ENCODE measurements at regions of chr1 and their contacts with region 1.

Region 1: DNA sequence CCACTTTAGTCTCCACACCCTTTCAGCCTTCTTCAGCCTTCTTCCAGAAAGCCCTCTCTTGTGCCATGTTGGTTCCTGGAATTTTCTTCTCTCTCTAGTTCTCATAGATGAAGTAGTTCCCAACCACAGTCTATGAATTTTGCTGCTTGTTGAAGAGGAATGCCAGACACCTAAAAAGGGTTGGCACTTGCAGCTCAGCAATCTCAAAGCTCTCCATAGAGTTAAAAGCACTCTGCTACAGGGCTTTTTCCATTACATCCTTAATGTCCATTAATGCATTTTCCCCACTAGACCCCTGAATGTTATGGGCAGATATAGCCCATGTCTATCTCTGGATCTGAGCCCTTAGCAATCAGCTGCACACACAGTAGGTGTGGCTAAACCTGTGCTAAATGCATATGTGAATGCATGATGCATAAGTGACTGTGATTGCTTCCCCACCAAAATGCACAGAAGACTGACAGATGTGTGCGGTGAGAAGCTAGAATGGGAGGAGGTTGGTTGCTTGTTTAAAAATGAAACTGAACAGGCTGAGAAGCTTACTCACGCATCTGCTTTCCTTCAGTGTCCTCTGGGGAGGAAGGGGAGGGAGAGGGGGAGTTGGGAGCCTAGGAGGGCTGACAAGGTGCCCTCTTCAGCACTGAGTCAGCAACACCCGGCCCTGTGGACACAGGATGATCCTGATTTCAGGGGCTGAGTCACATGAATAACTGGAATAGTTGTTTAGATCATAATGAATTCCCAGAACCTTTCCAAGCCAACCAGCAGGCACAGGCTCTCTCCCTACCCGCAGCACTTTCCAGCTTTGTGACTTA is 146.1 kb upstream of the FGGY start:
- DNase-seq: peak; percentile 67 to 86
- ATAC-seq: peak; percentile 85 to 98 (median 94)
- H3K4me3 ChIP-seq: peak overlapping the region in 6 of 10 donors; percentile 1 to 39 (median 21)
- H3K27ac ChIP-seq: peak overlapping the region; percentile 49 to 89 (median 78)
- H3K4me1 ChIP-seq: peaks cover 9 to 44% (median 36%) of the 10 kb centered on the region in 9 donors
- H3K27me3 ChIP-seq: no peaks in the 10 kb centered on the region
- CTCF ChIP-seq: no peak

Region 2: GRCh38 chr1:58896246-58897183 is 254.3 kb before region 1 on chr1:
- intact Hi-C with region 1: loop called in 4 of 10 experiments (anchors 5 to 10 kb)
- DNase-seq: peak; percentile 60 to 73
- ATAC-seq: peak; percentile 43 to 91 (median 74)
- H3K4me3 ChIP-seq: no peak overlapping the region
- H3K27ac ChIP-seq: peak overlapping the region; percentile 52 to 93 (median 73)
- H3K4me1 ChIP-seq: peaks cover 35 to 86% (median 74%) of the 10 kb centered on the region in 9 donors
- H3K27me3 ChIP-seq: no peaks in the 10 kb centered on the region
- CTCF ChIP-seq: peak in 1 of 9 donors; percentile 18

Region 3: DNA sequence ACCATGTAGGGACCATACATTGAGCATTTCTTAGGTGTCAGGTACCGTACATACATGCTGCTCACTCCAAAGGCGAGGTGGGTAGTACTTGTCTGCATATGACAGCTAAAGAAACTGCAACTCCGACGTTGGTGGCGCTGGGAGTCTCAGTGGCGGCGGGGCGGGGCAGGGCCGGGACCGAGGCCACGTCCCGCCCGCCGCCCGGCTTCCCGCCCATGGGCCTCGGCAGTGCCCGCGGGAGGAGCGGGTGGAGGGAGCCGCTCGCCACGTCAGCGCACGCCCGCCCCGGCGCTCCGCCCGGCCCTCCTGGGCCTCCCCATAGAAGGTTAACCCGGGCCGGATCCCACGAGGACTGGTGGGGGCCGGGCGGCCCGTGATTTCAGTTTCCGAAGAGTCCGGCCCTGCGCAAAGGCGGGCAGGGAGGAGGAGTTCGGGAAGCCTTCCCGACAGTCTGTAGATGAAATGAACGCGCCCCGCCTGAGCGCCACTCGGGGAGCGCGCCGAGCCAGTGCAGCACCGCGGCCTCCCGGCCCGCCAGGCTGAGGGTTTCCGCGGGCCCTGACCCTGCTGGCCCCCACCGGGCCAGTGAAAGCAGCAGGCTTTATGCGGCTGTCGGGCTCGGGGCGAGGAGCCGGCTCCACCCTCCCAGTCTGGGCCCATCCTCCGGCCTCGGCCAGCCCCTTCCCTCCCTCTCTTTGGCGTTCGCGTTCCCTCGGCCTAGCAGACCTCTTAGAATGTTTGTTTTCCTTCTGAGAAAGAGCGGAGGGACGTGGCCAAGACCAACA is 247.1 kb before region 1 on chr1:
- intact Hi-C with region 1: loop called in 4 of 10 experiments (anchors 5 to 10 kb)
- DNase-seq: peak; percentile 95 to 96
- ATAC-seq: peak; percentile 93 to 99 (median 96)
- H3K4me3 ChIP-seq: peak overlapping the region in 9 of 10 donors; percentile 35 to 67 (median 58)
- H3K27ac ChIP-seq: peak overlapping the region; percentile 90 to 99 (median 96)
- H3K4me1 ChIP-seq: peaks cover 5 to 43% (median 27%) of the 10 kb centered on the region in 9 donors
- H3K27me3 ChIP-seq: no peaks in the 10 kb centered on the region
- CTCF ChIP-seq: peak in 3 of 9 donors; percentile 6 to 7 (median 6)

Region 4: DNA sequence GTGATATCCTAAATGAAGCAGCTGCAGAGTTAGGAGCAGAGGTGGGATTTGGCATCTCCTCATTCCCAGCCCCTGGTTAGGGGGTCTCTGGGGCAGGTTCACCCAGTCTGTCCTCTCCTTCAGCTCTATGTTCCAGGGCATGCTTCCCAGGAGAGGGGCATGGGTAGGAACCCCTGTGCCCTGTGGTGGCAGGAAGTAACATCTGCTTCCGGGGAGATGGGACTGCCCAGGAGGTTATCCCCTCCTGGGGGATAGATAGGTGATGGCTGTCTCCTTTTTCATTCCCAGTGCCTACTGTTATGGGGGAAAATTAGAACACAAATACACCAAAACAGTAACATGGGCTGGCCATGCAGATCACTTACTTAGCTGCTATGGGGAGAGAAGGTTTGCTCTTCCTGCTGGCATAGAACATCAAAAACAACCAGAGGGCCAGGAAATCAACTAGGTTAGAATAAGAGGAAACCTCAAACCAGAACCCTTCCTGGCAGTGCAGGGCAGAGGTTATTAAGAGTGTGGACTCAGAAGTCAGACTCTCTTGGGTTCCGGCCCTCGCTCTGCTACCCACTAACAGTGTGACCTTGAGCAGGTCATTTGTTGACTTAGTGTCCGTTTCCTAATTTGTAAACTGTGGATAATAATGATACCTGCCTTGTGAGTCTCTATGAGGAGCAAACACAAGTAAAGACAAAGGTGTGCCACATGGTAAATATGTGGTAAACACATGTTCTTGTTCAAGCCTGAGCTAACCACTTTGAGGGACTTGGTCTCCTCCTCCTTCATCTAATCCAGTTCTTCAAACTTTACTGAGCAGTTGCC is 209.1 kb before region 1 on chr1:
- intact Hi-C with region 1: no loop called
- DNase-seq: no peak
- ATAC-seq: peak in 1 of 8 donors; percentile 33
- H3K4me3 ChIP-seq: no peak overlapping the region
- H3K27ac ChIP-seq: peak overlapping the region in 1 of 10 donors; percentile 71
- H3K4me1 ChIP-seq: peaks cover 0 to 36% (median 0%) of the 10 kb centered on the region in 9 donors
- H3K27me3 ChIP-seq: no peaks in the 10 kb centered on the region
- CTCF ChIP-seq: no peak

Region 5: DNA sequence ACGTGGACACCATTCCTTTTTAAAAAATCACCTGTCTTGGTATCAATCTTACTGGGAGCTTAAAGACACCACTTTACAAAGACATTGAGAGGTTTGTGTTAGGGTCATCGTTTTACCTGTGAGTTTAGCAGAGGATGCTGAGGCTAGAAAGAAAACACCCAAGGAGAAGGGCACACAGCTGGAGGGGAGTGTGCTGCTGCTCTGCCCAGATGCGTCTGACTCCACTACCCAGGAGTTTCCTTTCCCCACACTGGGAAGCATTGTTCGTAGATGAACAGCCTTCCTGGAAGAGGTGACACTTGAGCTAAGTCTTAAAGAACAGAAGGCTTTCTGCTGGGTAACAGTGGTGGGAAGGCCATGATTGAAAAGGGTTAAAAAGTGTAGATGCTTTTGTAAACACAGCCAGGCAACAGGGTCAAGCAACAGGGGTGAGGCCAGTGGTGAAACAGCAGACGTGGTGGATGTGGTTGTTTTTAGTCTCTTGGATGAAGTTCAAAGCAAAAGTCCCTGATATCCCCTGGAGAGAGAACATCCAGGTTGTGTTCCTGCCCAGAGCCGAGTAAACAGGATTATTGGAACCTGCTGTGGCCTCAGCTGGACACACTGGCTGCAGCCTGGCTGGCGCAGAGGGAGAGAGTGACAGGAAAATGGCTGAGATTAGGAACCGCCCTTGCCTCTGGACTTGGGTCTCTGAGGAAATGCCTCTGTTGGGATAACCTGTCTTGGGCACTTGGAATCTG is 168.4 kb before region 1 on chr1:
- intact Hi-C with region 1: loop called in 2 of 10 experiments (anchors 10 kb)
- DNase-seq: peak; percentile 34 to 40
- ATAC-seq: peak; percentile 39 to 97 (median 84)
- H3K4me3 ChIP-seq: no peak overlapping the region
- H3K27ac ChIP-seq: peak overlapping the region in 9 of 10 donors; percentile 24 to 68 (median 52)
- H3K4me1 ChIP-seq: peaks cover 5 to 34% (median 27%) of the 10 kb centered on the region in 9 donors
- H3K27me3 ChIP-seq: no peaks in the 10 kb centered on the region
- CTCF ChIP-seq: no peak

Region 6: GRCh38 chr1:59057211-59057694 is 93.5 kb before region 1 on chr1:
- intact Hi-C with region 1: loop called in 1 of 10 experiments (anchors 5 kb)
- DNase-seq: peak; percentile 80 to 87
- ATAC-seq: peak; percentile 89 to 93 (median 90)
- H3K4me3 ChIP-seq: no peak overlapping the region
- H3K27ac ChIP-seq: peak overlapping the region in 9 of 10 donors; percentile 6 to 66 (median 60)
- H3K4me1 ChIP-seq: peaks cover 7 to 37% (median 31%) of the 10 kb centered on the region in 9 donors
- H3K27me3 ChIP-seq: no peaks in the 10 kb centered on the region
- CTCF ChIP-seq: peak in 2 of 9 donors; percentile 30 to 32

Region 7: DNA sequence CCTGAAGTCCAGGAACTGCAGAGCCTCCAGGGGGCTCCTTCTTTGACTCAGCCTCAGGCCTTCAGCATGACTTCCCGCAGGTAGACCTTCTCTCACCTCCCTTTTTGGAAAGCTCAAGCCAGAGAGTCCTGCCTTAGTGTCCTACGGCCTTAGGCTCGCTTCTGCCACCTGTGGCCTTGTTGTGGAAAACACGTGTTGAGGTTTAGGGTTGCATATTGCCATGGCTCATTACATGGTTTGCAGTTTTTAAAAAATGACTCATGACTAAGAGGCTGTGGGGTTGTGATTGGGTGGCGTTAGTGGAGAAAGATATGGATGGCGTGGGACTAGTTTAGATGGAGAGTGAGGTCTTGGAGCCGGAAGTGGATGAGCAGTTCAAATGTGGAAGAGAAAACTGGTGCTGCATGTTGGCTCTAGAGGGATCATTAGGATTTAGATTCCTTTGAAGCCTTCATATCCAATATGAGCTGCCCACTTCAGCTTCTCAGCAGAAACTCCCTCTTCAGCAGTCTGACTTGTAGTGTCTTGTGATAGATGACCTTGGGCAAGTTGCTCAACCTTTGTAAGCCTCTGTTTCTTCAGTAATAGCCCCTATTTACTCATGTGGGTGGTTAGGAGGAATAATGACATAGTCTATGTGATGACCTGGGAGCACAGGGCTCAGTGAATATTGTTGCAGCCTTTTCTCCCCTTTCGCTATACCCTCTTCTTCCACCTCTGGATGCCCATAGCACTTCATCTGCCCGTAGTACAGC is 139.6 kb after region 1 on chr1:
- intact Hi-C with region 1: loop called in 4 of 10 experiments (anchors 5 to 10 kb)
- DNase-seq: peak in 1 of 2 donors; percentile 15
- ATAC-seq: peak in 7 of 8 donors; percentile 18 to 74 (median 50)
- H3K4me3 ChIP-seq: no peak overlapping the region
- H3K27ac ChIP-seq: peak overlapping the region in 1 of 10 donors; percentile 91
- H3K4me1 ChIP-seq: peaks cover 0 to 43% (median 5%) of the 10 kb centered on the region in 9 donors
- H3K27me3 ChIP-seq: no peaks in the 10 kb centered on the region
- CTCF ChIP-seq: peak in 7 of 9 donors; percentile 38 to 65 (median 54)

Measured in heart right ventricle (tissue), 16 donors.